Activated B cell treated with CpG ODN at 0.5 μM for 24 hours (primary cell): ENCODE measurements at regions of chr4 and their contacts with region 1.

Region 1: GRCh38 chr4:93764639-93765246 is 63.8 kb upstream of the ATOH1 start:
- DNase-seq: no peak
- ATAC-seq: no peak
- H3K4me3 Mint-ChIP-seq: no peak overlapping the region
- H3K27ac Mint-ChIP-seq: no peak overlapping the region
- H3K4me1 Mint-ChIP-seq: peaks cover 4% of the 10 kb centered on the region
- H3K27me3 Mint-ChIP-seq: peaks cover 3% of the 10 kb centered on the region
- CTCF ChIP-seq: no peak

Region 2: DNA sequence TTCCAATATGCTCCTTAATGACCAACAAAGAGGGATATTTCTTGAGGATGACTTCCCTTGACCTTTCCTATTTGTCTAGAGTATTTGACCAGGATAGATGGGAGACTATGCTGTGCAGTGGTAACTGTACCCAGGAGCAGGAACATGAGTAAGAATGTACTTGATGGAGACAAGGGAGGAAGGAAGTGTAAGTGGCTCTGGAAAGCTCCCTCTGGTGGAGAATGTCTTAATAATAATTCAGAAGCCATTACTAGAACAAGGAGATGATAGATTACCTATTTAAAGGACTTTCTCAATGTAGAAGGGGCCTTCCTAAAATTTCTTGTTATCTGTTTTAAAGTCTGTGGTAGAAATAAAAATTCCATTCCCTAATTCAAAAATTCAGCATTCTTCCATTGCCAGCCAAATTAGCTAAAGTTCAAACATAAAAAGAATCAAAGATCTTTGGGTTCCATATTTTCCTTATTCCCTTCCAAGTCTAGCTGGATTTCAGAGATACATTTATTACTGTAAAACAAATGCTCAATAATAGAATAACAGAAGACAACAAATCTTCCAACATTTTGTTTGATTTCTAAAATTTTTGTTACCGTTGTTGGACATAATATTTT is 1377.2 kb before region 1 on chr4:
- CTCF ChIA-PET with region 1: no interaction called
- POLR2A ChIA-PET with region 1: no interaction called
- intact Hi-C with region 1: loop called (anchors 10 kb)
- DNase-seq: no peak
- ATAC-seq: no peak
- H3K4me3 Mint-ChIP-seq: no peak overlapping the region
- H3K27ac Mint-ChIP-seq: no peak overlapping the region
- H3K4me1 Mint-ChIP-seq: no peaks in the 10 kb centered on the region
- H3K27me3 Mint-ChIP-seq: no peaks in the 10 kb centered on the region
- CTCF ChIP-seq: no peak

Region 3: GRCh38 chr4:93561842-93562241 is 202.9 kb before region 1 on chr4:
- CTCF ChIA-PET with region 1: no interaction called
- POLR2A ChIA-PET with region 1: no interaction called
- intact Hi-C with region 1: no loop called
- DNase-seq: no peak
- ATAC-seq: no peak
- H3K4me3 Mint-ChIP-seq: no peak overlapping the region
- H3K27ac Mint-ChIP-seq: no peak overlapping the region
- H3K4me1 Mint-ChIP-seq: no peaks in the 10 kb centered on the region
- H3K27me3 Mint-ChIP-seq: no peaks in the 10 kb centered on the region
- CTCF ChIP-seq: no peak

Region 4: GRCh38 chr4:93710101-93710846 is 54.5 kb before region 1 on chr4:
- CTCF ChIA-PET with region 1: no interaction called
- POLR2A ChIA-PET with region 1: no interaction called
- intact Hi-C with region 1: loop called (anchors 1 kb)
- DNase-seq: no peak
- ATAC-seq: no peak
- H3K4me3 Mint-ChIP-seq: no peak overlapping the region
- H3K27ac Mint-ChIP-seq: no peak overlapping the region
- H3K4me1 Mint-ChIP-seq: no peaks in the 10 kb centered on the region
- H3K27me3 Mint-ChIP-seq: no peaks in the 10 kb centered on the region
- CTCF ChIP-seq: no peak